CD8-positive, alpha-beta T cell (primary cell): ENCODE measurements at regions of chr2 and their contacts with region 1.

Region 1: GRCh38 chr2:69643602-69644505 is at the start of gene AAK1:
- DNase-seq: peak; percentile 60 to 92 (median 83)
- ATAC-seq: peak; percentile 41
- H3K4me3 ChIP-seq: peak within 1 kb of the TSS; percentile 83 to 95
- H3K4me3 Mint-ChIP-seq: peak within 1 kb of the TSS; percentile 96
- H3K27ac ChIP-seq: peak within 1 kb of the TSS; percentile 58 to 86
- H3K27ac Mint-ChIP-seq: peak within 1 kb of the TSS; percentile 97
- H3K4me1 ChIP-seq: peaks cover 54% of the 10 kb centered on the region
- H3K4me1 Mint-ChIP-seq: peaks cover 65% of the 10 kb centered on the region
- H3K27me3 ChIP-seq: no peaks in the 10 kb centered on the region
- H3K27me3 Mint-ChIP-seq: no peaks in the 10 kb centered on the region
- CTCF ChIP-seq: no peak
- total RNA-seq, gene AAK1: 156 to 174 TPM

Region 2: DNA sequence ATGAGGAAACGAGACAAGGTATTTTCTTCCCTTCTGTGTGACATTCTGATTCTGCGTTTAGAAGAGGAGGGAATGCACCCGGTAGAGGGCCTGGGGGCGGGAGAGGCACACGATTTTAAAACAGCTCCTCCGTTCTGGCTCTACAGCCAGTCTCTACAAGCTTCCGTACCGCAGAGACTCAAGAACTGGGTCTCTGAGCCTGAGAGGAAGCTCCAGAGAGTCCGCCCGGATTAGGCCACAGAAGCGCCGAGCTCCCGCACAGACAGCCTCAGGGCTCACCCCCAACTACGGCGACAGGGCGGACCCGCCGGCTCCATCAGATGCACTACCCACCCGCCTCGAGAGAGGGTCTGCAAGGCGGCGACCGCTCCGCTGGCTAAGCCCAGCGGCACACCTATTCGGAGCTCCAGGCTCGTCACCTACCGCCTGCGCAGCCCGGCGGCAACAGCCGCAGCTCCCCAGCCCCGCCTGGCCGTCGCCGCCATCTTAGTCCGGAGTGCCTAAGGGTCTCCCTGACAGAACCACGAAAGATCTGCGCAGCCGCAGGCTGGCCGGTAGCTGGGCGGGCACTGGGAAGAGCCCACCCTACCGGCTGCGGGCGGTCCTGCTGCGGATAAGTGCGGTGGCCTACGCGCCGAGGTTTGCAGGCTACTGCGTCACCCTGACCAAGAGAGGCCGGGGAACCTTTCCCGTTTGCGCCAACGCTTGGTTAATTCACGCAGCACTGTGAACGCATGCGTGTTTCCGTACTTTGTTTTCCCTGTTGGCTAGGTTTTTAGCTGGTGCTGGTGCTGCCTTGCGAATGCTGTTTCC is 206.7 kb before region 1 on chr2 and contains the start of gene NFU1:
- CTCF ChIA-PET with region 1: interaction called, 3 read pairs
- POLR2A ChIA-PET with region 1: interaction called, 4 read pairs
- intact Hi-C with region 1: loop called in 1 of 2 experiments (anchors 2 kb)
- DNase-seq: peak; percentile 78 to 96 (median 90)
- ATAC-seq: peak; percentile 79
- H3K4me3 ChIP-seq: peak within 1 kb of the TSS; percentile 68 to 83
- H3K4me3 Mint-ChIP-seq: peak within 1 kb of the TSS; percentile 98
- H3K27ac ChIP-seq: peak within 1 kb of the TSS; percentile 86 to 95
- H3K27ac Mint-ChIP-seq: peak within 1 kb of the TSS; percentile 100
- H3K4me1 ChIP-seq: peaks cover 23% of the 10 kb centered on the region
- H3K4me1 Mint-ChIP-seq: peaks cover 44% of the 10 kb centered on the region
- H3K27me3 ChIP-seq: no peaks in the 10 kb centered on the region
- H3K27me3 Mint-ChIP-seq: no peaks in the 10 kb centered on the region
- CTCF ChIP-seq: peak; percentile 37
- total RNA-seq, gene NFU1: 28.4 to 33.8 TPM

Region 3: DNA sequence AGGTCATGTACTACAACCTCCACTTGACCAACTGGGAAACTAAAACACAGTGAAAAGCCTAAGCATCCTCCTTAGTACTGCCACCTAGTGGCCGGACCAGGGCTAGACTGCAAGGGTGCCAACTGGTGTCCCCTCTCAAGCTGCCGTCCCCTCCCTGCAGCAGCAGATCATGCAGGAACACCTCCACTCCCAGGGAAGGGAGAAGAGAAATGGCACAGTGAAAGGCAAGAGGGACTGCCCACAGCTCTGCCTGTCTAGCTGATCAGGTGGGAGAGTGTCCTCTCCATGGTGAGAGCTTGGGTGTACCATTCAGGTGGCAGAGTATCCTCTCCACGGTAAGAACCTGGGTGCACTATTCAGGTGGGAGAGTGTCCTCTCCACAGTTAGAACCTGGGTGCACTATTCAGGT is 78.4 kb before region 1 on chr2:
- CTCF ChIA-PET with region 1: interaction called, 51 read pairs
- POLR2A ChIA-PET with region 1: interaction called, 21 read pairs
- intact Hi-C with region 1: loop called in 1 of 2 experiments (anchors 2 kb)
- DNase-seq: peak; percentile 43 to 83 (median 73)
- ATAC-seq: peak; percentile 79
- H3K4me3 ChIP-seq: no peak overlapping the region
- H3K4me3 Mint-ChIP-seq: peak overlapping the region; percentile 63
- H3K27ac ChIP-seq: no peak overlapping the region
- H3K27ac Mint-ChIP-seq: peak overlapping the region; percentile 72
- H3K4me1 ChIP-seq: peaks cover 91% of the 10 kb centered on the region
- H3K4me1 Mint-ChIP-seq: peaks cover 92% of the 10 kb centered on the region
- H3K27me3 ChIP-seq: no peaks in the 10 kb centered on the region
- H3K27me3 Mint-ChIP-seq: no peaks in the 10 kb centered on the region
- CTCF ChIP-seq: peak; percentile 80

Region 4: DNA sequence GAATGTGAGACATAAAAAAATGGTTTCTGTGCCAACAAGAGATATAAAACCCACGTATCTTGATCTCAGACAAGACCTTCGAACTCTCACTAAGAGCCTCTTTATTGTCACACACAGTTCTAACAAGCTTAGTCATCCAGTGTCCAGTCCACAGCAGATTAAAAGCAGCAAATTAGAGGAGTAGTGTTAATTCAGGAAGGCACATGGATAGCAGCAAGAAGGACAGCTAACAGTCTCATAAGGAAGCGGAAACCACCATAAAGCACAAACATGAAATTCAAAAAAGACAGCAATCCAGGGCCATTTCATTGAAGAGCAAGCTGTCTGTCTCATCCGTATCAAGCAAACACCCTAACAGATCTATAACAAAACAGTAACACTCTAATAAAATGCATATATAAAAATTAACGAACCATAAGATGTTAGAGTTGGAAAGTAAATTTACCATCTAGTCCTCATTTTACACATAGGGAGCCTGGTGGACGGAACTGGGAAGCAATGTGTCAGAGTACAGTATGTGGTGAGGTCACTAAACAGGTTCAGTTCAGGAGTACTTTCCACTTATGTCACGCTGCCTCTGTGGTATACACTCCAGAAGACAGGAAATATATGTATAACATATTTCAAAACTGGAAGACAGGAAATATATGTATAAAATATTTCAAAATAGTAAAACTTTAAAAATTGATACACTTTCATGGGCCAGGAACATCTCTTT is 18.6 kb before region 1 on chr2:
- CTCF ChIA-PET with region 1: interaction called, 4 read pairs
- POLR2A ChIA-PET with region 1: interaction called, 13 read pairs
- intact Hi-C with region 1: loop called (anchors 2 kb)
- DNase-seq: peak in 1 of 9 experiments; percentile 40
- ATAC-seq: peak; percentile 19
- H3K4me3 ChIP-seq: no peak overlapping the region
- H3K4me3 Mint-ChIP-seq: no peak overlapping the region
- H3K27ac ChIP-seq: peak overlapping the region in 1 of 2 experiments; percentile 7
- H3K27ac Mint-ChIP-seq: no peak overlapping the region
- H3K4me1 ChIP-seq: peaks cover 81% of the 10 kb centered on the region
- H3K4me1 Mint-ChIP-seq: peaks cover 17% of the 10 kb centered on the region
- H3K27me3 ChIP-seq: no peaks in the 10 kb centered on the region
- H3K27me3 Mint-ChIP-seq: no peaks in the 10 kb centered on the region
- CTCF ChIP-seq: no peak

Region 5: DNA sequence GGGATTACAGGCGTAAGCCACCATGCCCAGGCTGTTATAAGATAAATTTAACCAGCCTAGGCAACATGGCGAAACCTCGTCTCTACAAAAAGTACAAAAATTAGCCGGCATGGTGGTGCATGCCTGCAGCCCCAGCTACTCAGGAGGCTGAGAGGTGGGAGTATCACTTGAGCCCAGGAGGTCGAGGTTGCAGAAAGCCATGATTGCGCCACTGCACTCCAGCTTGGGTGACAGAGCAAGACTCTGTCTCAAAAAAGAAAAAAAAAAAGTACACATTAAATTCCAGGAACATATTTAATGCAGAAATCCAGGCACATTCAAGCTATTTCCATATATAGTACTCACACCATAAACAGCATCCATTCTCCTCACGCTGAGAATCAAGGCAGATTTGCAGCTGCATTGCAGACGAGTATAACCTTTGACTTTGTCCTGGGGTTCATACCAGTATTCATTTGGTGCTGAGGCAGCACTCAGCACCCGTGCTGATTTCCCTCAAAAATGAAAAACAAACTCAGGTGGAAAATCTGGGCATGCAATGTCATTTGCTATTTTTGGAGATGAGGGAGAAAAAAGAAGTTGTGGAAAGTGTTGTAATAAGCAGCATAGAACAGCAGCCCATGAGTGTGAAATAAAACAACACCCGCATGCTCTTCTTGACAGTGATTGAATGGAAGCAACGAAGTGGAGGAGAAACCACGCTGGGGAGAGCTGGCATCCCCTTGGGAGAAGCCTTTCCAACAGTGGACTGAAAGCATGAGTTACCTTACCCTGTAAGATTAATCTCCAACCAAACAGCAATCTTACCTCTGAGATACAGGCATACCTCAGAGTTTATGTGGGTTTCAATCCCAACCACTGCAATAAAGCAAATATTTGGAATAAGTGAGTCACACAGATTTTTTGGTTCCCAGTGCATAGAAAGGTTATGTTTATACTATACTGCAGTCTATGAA is 51.3 kb after region 1 on chr2:
- CTCF ChIA-PET with region 1: interaction called, 36 read pairs
- POLR2A ChIA-PET with region 1: interaction called, 90 read pairs
- intact Hi-C with region 1: loop called (anchors 1 to 2 kb)
- DNase-seq: no peak
- ATAC-seq: no peak
- H3K4me3 ChIP-seq: no peak overlapping the region
- H3K4me3 Mint-ChIP-seq: peak overlapping the region; percentile 10
- H3K27ac ChIP-seq: peak overlapping the region in 1 of 2 experiments; percentile 4
- H3K27ac Mint-ChIP-seq: peak overlapping the region; percentile 98
- H3K4me1 ChIP-seq: peaks cover 83% of the 10 kb centered on the region
- H3K4me1 Mint-ChIP-seq: peaks cover 91% of the 10 kb centered on the region
- H3K27me3 ChIP-seq: no peaks in the 10 kb centered on the region
- H3K27me3 Mint-ChIP-seq: no peaks in the 10 kb centered on the region
- CTCF ChIP-seq: no peak

Region 6: DNA sequence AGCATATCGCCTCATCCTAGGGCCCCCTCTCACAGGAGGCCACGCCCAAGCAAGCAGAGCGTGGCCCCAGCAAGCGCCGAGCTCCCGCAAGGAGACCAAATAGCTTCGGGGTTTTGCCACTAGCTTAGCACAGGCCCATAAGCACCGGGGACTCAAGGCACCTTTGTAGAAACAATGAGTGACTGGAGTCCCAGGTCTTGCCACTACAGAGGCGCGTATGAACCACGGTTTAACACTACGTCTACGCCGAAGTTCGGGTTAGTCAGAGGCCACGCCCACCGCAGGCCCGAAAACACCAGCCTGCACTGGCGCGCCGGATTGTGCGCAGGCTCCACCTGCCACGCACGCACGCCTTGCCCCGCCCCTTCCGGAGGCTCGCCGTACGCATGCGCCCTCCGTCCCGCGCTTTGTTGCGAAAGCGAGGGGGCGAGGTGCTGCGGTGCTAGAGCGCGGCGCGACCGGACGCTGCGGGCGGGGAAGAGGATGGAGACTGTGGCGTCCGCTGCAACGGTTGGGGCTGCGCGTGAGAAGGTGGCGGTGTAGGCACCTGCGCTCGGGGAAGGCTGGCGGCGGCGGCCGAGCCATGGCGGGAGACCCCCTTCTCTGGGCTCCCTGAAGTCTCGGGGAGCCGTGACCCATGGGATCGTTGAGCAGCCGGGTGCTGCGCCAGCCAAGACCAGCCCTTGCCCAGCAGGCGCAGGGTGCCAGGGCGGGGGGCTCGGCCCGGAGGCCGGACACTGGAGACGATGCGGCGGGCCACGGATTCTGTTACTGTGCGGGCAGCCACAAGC is 185.6 kb after region 1 on chr2 and contains the start of gene GMCL1:
- CTCF ChIA-PET with region 1: interaction called, 3 read pairs
- POLR2A ChIA-PET with region 1: interaction called, 5 read pairs
- intact Hi-C with region 1: loop called (anchors 1 to 5 kb)
- DNase-seq: peak; percentile 96 to 100 (median 99)
- ATAC-seq: peak; percentile 94
- H3K4me3 ChIP-seq: peak within 1 kb of the TSS; percentile 70 to 75
- H3K4me3 Mint-ChIP-seq: peak within 1 kb of the TSS; percentile 96
- H3K27ac ChIP-seq: peak within 1 kb of the TSS; percentile 89 to 95
- H3K27ac Mint-ChIP-seq: peak within 1 kb of the TSS; percentile 96
- H3K4me1 ChIP-seq: peaks cover 36% of the 10 kb centered on the region
- H3K4me1 Mint-ChIP-seq: peaks cover 54% of the 10 kb centered on the region
- H3K27me3 ChIP-seq: no peaks in the 10 kb centered on the region
- H3K27me3 Mint-ChIP-seq: no peaks in the 10 kb centered on the region
- CTCF ChIP-seq: no peak
- total RNA-seq, gene GMCL1: 37.1 to 41.4 TPM

Region 7: DNA sequence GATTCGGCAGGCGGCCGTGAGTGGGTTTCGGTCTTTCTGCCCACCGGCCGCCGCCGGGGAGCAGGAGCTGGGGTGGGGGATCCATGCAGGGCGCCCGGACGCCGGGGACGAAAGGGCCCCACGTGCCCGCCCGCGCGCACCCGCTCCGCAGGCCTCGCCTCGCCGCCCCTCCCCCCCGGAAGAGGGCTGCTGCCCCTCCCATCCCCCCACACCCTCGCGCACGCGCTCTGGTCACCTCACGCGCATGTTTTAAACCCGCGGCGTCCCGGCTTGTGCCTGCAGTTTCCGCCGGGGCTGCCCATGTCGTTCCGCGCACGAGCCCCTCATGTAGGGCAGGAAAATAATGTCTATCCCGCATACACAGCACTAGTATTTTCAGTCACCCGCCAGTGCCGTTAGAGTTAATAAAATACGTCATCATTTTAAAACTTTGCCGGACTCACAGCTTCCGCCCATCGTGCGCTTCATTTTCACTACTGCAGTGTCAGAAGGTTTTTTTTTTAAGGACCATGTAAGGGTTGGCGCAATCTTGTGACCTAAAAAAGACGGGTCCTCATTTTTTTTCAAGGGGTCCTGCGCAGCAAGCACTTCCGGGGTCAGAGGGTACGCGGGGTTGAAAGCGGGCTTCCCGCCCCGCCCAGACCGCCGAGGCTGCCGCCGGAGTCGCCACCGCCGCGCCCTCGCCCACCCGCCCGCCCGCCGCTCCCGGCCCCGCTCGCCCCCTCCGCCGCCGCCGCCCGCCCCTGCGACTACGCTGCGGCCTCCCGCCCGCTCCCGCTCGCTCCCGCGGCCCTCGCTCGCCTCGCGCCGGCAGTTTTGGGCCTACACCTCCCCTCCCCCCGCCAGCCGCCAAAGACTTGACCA is 443.2 kb after region 1 on chr2 and contains the start of gene PCBP1:
- CTCF ChIA-PET with region 1: no interaction called
- POLR2A ChIA-PET with region 1: no interaction called
- intact Hi-C with region 1: loop called in 1 of 2 experiments (anchors 10 kb)
- DNase-seq: peak; percentile 95 to 100 (median 98)
- ATAC-seq: peak; percentile 60
- H3K4me3 ChIP-seq: peak within 1 kb of the TSS; percentile 95 to 98
- H3K4me3 Mint-ChIP-seq: peak within 1 kb of the TSS; percentile 98
- H3K27ac ChIP-seq: peak within 1 kb of the TSS; percentile 99
- H3K27ac Mint-ChIP-seq: peak within 1 kb of the TSS; percentile 100
- H3K4me1 ChIP-seq: peaks cover 62% of the 10 kb centered on the region
- H3K4me1 Mint-ChIP-seq: peaks cover 69% of the 10 kb centered on the region
- H3K27me3 ChIP-seq: no peaks in the 10 kb centered on the region
- H3K27me3 Mint-ChIP-seq: no peaks in the 10 kb centered on the region
- CTCF ChIP-seq: no peak
- total RNA-seq, gene PCBP1: 239 to 255 TPM

Region 8: GRCh38 chr2:70305531-70305930 is 661.7 kb after region 1 on chr2:
- CTCF ChIA-PET with region 1: no interaction called
- POLR2A ChIA-PET with region 1: no interaction called
- intact Hi-C with region 1: no loop called
- DNase-seq: no peak
- ATAC-seq: no peak
- H3K4me3 ChIP-seq: no peak overlapping the region
- H3K4me3 Mint-ChIP-seq: no peak overlapping the region
- H3K27ac ChIP-seq: no peak overlapping the region
- H3K27ac Mint-ChIP-seq: no peak overlapping the region
- H3K4me1 ChIP-seq: peaks cover 14% of the 10 kb centered on the region
- H3K4me1 Mint-ChIP-seq: peaks cover 16% of the 10 kb centered on the region
- H3K27me3 ChIP-seq: no peaks in the 10 kb centered on the region
- H3K27me3 Mint-ChIP-seq: peaks cover 8% of the 10 kb centered on the region
- CTCF ChIP-seq: no peak